ENCODE measurements at regions of chr17 and their contacts with region 1.

Region 1: DNA sequence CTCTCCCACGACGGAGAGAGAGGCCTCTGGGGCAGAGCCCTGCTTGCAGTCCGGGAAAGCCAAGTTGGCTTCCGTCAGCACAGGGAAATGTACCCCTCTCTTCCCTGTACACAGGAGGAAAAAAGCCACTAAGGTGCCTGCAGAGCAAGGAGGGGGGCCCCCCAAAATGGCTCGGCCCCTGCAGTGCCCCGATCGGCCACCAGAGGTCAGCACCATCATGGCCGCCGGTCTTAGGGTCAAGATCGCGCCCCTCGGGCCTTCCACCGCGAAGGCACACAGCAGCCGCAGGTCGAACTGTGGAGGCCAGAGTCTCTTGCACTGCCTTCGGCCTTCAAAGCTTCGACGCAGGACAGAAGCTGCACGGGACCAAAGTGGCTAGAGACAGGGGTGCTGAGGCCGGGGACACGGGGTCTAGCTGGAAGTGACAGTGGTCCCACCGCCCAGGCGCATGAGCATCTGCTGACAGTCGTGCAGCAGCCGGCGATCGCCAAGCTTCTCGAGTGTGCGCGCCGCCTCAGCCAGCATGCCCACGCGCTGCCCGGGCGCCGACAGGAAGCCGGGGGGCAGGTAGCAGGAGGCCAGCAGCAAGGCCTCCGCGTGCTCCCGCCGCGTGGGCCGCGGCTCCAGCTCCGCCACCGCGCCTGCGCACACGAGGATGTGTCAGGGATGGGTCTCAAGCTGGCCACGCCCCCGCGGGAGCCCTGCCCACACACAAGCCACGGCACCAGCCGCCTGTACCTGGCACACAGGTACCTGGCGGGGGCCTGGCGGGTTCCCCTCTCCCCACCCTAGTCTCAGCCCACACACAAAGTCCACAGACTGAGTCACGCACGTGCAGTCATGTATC is 24.4 kb downstream of the SREBF1 start:
- DNase-seq: peak; percentile 77 to 93 (median 92)
- ATAC-seq: peak; percentile 32 to 53
- H3K4me3 ChIP-seq: no peak overlapping the region
- H3K27ac ChIP-seq: no peak overlapping the region
- H3K4me1 ChIP-seq: no peaks in the 10 kb centered on the region
- H3K27me3 ChIP-seq: no peaks in the 10 kb centered on the region

Region 2: GRCh38 chr17:17859909-17860765 is 47.7 kb after region 1 on chr17:
- intact Hi-C with region 1: loop called in 3 of 4 experiments (anchors 5 kb)
- DNase-seq: peak; percentile 63 to 85 (median 82)
- ATAC-seq: peak; percentile 90 to 91
- H3K4me3 ChIP-seq: no peak overlapping the region
- H3K27ac ChIP-seq: peak overlapping the region; percentile 31
- H3K4me1 ChIP-seq: peaks cover 3% of the 10 kb centered on the region
- H3K27me3 ChIP-seq: no peaks in the 10 kb centered on the region

Region 3: GRCh38 chr17:17919169-17920107 is 107.0 kb after region 1 on chr17:
- intact Hi-C with region 1: loop called in 2 of 4 experiments (anchors 5 to 10 kb)
- DNase-seq: peak; percentile 69 to 85 (median 83)
- ATAC-seq: peak; percentile 81 to 83
- H3K4me3 ChIP-seq: no peak overlapping the region
- H3K27ac ChIP-seq: peak overlapping the region; percentile 24
- H3K4me1 ChIP-seq: peaks cover 12% of the 10 kb centered on the region
- H3K27me3 ChIP-seq: no peaks in the 10 kb centered on the region

Measured in right cardiac atrium (tissue), 5 donors.